Left ventricle myocardium superior (tissue), 1 donor: ENCODE measurements at regions of chr19 and their contacts with region 1.

Region 1: DNA sequence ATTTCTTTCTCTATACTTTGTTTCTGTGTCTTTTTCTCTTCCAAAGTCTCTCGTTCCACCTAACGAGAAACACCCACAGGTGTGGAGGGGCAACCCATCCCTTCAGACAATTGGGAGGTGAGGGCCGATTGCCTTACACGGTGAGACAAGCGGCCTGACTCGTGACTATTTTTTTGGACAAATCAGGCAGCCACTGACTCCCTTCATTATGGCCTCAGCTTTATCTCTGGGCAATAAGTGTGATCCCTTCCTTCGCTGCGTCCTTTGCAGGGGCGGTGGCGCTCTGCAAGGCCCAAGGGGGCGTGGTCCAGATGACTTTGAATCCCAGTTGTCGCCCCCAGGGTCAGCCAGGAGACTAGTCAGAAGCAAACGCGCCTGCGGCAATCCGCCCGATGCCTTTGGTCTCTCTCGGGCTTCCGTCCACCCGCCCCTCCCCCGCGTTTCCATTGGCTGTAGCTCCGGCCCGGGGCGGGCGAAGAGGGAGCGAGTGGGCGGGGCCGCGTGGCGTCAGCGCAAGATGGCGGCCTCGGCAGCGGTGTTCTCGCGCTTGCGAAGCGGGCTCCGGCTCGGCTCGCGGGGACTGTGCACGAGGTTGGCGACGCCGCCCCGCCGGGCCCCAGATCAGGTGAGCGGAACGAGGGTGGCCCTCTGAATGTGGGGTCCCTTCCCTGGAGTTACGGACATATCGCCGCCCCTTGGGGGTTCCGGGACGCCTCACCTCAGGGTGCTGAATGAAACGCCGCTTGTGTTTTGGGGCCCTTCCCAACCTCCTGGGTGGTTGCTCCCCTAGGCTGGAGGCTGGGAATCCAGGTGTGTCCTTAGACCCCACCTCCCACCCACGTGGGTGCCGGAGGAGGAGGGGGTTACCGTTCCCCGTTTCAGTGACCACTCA is at the start of gene TIMM50:
- DNase-seq: peak; percentile 99
- ATAC-seq: peak; percentile 98
- total RNA-seq, gene TIMM50: 75.3 TPM

Region 2: DNA sequence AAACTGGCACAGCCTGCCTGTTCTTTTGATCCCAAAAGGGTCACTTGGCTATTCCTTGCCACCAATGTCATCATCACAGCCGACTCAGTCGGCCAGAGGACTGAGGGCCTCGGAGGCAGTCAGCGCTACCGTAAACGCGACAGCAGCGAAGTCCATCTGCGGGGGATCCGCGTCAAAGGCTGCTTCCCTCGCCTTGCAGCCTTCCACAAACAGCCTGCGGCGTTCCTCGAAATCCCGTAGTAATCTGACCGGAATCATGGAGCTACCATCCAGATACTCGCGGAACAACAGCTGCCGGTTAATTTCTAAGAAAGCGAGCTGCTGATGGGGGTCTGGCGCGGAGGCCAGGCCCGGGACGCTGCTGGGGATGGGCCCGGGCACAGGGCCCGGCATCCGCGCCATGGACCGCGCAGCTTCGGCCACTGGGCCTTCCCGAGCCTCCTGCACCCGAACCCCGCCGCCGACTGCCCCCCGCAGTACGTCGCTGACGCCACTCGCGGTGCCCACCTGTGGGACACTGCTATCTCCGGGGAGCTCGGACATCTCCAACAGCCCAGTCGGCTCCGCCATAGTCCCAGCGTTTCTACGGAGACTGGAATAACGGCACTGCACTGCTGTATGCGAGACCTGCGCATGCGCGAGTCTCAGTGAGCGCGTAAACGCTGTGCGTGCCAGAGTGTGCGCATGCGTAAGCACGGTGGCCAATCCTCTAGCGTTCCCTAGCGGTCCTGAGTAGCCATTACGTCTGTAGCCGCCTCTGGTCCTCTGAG is 51.8 kb after region 1 on chr19 and contains the start of gene EID2B:
- intact Hi-C with region 1: loop called (anchors 10 kb)
- DNase-seq: peak; percentile 99
- ATAC-seq: peak; percentile 98
- total RNA-seq, gene EID2B: 2.0 TPM